Pancreas (tissue), 10 donors: ENCODE measurements at regions of chr7 and their contacts with region 1.

Region 1: DNA sequence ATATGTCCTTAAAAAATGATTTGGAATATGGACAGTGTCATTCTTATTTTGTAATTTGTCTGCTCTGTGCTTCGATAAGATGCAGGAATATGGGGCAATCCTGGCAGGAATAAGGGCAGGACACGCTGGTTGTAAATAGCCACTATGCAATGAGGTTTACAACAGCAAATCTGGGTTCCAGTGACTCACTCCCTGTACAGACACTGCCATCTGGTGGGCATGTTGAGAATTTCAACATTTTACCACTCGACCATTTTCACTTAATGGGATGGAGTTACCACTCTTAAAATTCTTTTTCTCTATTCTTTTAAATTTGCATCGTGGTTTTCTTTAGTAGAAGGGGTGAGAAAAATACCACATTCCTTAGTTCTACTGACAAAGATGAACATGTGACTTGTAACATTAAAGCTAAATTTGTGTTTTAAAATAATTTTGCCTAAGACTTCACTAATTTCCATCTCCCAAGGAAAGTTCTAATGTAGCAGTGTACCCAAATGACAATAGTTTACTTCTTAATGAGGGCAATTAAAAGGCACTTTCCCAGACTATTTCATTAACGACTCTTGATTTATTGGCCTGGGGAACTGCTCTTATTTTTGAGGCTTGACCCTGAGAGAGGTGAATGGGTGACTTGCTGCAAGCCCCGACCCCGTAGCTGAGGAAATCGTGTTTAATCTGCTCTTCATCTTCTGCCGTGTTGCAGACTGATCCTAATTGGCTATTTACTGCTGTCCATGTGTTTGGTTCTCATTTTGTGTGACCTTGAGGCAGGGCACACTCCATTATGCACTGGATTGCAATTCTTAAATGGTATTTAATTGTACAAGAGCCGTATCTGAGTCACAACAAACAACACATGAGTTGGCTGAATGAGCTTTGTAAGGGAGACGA is 173.6 kb upstream of the IMMP2L start:
- DNase-seq: peak in 3 of 6 donors; percentile 25 to 63 (median 33)
- ATAC-seq: peak in 3 of 4 donors; percentile 83 to 91 (median 84)
- H3K4me3 ChIP-seq: no peak overlapping the region
- H3K27ac ChIP-seq: no peak overlapping the region
- H3K4me1 ChIP-seq: no peaks in the 10 kb centered on the region
- H3K27me3 ChIP-seq: no peaks in the 10 kb centered on the region
- CTCF ChIP-seq: peak; percentile 61 to 80 (median 72)

Region 2: DNA sequence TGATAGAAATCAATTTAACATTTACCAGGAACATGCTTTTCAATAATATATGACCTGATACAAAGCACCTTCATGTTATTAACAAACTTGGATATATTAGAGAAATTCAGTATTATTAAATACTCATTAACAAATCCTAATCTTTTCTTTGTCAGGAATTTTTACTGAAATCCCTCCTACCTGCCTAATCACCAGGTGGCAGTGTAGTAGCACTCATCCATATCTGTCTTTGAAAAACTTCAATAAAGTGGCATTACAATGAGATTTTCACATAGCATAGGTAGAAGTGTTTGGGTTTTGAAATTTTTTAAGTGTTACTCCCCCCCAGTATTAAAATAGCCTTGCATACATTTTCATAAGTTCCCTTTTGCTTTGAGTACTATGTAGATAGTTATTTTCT is 1891.5 kb before region 1 on chr7:
- intact Hi-C with region 1: loop called in 1 of 3 experiments (anchors 10 kb)
- DNase-seq: no peak
- ATAC-seq: peak in 3 of 4 donors; percentile 39 to 57 (median 43)
- H3K4me3 ChIP-seq: no peak overlapping the region
- H3K27ac ChIP-seq: no peak overlapping the region
- H3K4me1 ChIP-seq: no peaks in the 10 kb centered on the region
- H3K27me3 ChIP-seq: no peaks in the 10 kb centered on the region
- CTCF ChIP-seq: peak in 3 of 4 donors; percentile 16 to 33 (median 19)